ENCODE measurements at regions of chr5 and their contacts with region 1.

Region 1: GRCh38 chr5:149367249-149367971 is 9.6 kb downstream of the PCYOX1L start:
- DNase-seq: peak; percentile 87
- H3K4me3 ChIP-seq: no peak overlapping the region; a peak in 1 of 4 replicates
- H3K27ac ChIP-seq: no peak overlapping the region; a peak in 1 of 4 replicates
- H3K4me1 ChIP-seq: peaks cover 0 to 14% of the 10 kb centered on the region in 2 experiments; a peak in 1 of 4 replicates
- H3K27me3 ChIP-seq: no peaks in the 10 kb centered on the region
- CTCF ChIP-seq: peak; percentile 88
- EP300 ChIP-seq: no peak
- RAD21 ChIP-seq: peak; percentile 87

Region 2: GRCh38 chr5:149301747-149302380 is 65.5 kb before region 1 on chr5:
- CTCF ChIA-PET with region 1: interaction called, 23 read pairs
- POLR2A ChIA-PET with region 1: no interaction called
- DNase-seq: no peak
- H3K4me3 ChIP-seq: no peak overlapping the region
- H3K27ac ChIP-seq: no peak overlapping the region
- H3K4me1 ChIP-seq: peaks cover 0 to 12% of the 10 kb centered on the region in 2 experiments; a peak in 1 of 4 replicates
- H3K27me3 ChIP-seq: no peaks in the 10 kb centered on the region
- CTCF ChIP-seq: no peak
- EP300 ChIP-seq: no peak
- RAD21 ChIP-seq: no peak

Region 3: DNA sequence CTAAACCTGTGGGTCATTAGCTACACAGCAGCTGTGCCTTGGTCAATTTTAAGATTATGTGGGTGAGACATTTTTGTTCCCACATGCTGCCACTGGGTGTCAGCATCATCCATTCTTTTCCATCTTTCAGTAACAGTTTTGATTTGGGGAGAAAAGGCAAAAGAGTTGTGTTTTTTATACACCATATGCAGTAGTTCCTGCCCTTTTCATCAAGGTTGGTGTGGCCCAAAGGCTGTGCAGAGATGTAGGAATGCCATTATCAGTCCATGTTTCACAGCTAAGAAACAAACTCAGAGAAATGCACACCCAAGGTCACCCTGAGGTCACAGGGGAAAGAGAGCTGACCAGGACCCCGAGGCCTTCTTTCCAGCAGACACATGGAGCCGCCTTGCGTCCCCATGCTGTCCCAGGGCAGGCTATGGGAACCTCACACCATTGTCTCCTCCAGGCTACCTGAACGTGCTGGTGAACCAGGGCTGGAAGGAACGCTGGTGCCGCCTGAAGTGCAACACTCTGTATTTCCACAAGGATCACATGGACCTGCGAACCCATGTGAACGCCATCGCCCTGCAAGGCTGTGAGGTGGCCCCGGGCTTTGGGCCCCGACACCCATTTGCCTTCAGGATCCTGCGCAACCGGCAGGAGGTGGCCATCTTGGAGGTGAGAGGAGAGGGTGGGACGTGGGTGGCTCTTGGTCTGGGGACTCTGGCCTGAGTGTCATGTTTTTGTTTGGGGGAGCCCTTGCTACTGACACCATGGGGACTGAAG is 49.9 kb before region 1 on chr5:
- CTCF ChIA-PET with region 1: interaction called, 120 read pairs
- POLR2A ChIA-PET with region 1: no interaction called
- DNase-seq: peak; percentile 76
- H3K4me3 ChIP-seq: no peak overlapping the region
- H3K27ac ChIP-seq: peak overlapping the region in 1 of 2 experiments; percentile 63; a peak in 2 of 4 replicates
- H3K4me1 ChIP-seq: peaks cover 13 to 20% of the 10 kb centered on the region in 2 experiments
- H3K27me3 ChIP-seq: no peaks in the 10 kb centered on the region
- CTCF ChIP-seq: peak; percentile 75
- EP300 ChIP-seq: no peak
- RAD21 ChIP-seq: peak; percentile 90

Region 4: GRCh38 chr5:149345147-149345875 is 22.1 kb before region 1 on chr5 and contains the start of gene GRPEL2:
- CTCF ChIA-PET with region 1: interaction called, 11 read pairs
- POLR2A ChIA-PET with region 1: interaction called, 4 read pairs
- DNase-seq: peak; percentile 92
- H3K4me3 ChIP-seq: peak within 1 kb of the TSS; percentile 94 to 100
- H3K27ac ChIP-seq: peak within 1 kb of the TSS; percentile 70 to 97
- H3K4me1 ChIP-seq: peaks cover 0 to 15% of the 10 kb centered on the region in 2 experiments; a peak in 3 of 4 replicates
- H3K27me3 ChIP-seq: no peaks in the 10 kb centered on the region
- CTCF ChIP-seq: no peak
- EP300 ChIP-seq: no peak
- RAD21 ChIP-seq: no peak
- polyA plus RNA-seq, gene GRPEL2: 4.6 and 6.0 TPM in 2 replicates

Region 5: DNA sequence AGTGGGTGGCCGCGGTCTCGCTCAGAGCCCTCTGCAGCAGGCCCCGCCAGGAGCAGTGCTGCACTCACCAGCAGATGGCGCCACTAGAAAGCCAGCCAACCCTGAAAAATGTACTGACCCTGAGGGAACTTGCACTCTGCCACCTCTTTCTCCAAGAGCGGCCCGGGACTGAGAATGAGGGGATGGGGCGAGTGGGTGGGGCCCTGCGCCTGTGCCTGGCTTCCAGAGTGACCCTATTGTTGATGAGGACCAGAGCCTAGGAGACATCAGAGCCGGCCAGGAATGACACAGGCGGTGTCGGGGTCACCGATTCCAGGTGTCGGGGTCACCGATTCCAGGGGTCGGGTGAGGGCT is 14.6 kb after region 1 on chr5:
- CTCF ChIA-PET with region 1: interaction called, 173 read pairs
- POLR2A ChIA-PET with region 1: interaction called, 3 read pairs
- DNase-seq: peak; percentile 93
- H3K4me3 ChIP-seq: no peak overlapping the region; a peak in 1 of 4 replicates
- H3K27ac ChIP-seq: peak overlapping the region in 1 of 2 experiments; percentile 73; a peak in 1 of 4 replicates
- H3K4me1 ChIP-seq: peaks cover 0 to 48% of the 10 kb centered on the region in 2 experiments; a peak in 1 of 4 replicates
- H3K27me3 ChIP-seq: no peaks in the 10 kb centered on the region
- CTCF ChIP-seq: peak; percentile 91
- EP300 ChIP-seq: no peak
- RAD21 ChIP-seq: peak; percentile 94

Region 6: DNA sequence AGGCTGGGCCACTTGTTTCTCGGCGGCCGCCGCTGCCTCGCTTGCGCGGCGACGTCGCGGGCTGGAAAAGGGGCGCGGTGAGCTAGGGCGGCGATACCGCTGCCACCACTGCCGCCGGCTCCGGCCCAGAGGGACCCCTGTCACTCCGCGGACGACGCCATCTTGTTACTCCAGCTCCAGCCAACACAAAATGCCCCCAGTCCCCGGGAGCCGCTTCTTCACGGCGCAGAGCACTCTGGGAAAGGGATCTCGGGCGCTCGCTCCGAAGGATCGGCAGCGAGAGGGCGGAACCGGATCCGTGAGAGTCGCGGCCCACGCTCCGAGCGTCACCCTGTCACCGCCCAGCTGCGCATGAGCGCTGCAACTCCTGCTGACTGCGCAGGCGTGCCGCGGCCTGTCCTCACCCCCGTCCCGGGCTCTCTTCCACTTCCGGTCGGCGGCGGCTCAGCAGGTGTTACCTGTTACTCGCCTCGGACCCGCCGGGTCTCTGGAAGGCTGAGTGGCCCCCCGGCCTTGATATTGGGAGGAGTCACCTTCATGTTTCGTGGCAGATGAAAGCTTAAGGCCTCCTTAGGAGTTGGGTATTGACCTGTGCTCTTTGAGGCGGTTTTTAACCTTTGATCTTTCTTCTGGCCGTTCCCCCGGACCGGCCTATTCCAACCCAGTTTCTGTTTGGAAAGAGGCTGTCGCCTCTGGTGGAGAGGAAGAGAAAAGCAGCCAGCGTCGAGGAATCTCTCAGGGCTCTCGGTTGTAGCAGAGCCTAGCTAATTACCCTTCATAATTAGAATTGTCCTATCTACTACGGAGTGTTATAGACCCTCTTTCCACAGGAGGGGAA is 184.0 kb after region 1 on chr5 and contains the start of gene CSNK1A1:
- CTCF ChIA-PET with region 1: interaction called, 34 read pairs
- POLR2A ChIA-PET with region 1: no interaction called
- DNase-seq: peak; percentile 99
- H3K4me3 ChIP-seq: peak within 1 kb of the TSS; percentile 88 to 95
- H3K27ac ChIP-seq: peak within 1 kb of the TSS; percentile 92 to 96
- H3K4me1 ChIP-seq: peaks cover 6 to 15% of the 10 kb centered on the region in 2 experiments; a peak in 3 of 4 replicates
- H3K27me3 ChIP-seq: no peaks in the 10 kb centered on the region
- CTCF ChIP-seq: peak; percentile 78
- EP300 ChIP-seq: 0 out of 4 replicates have a peak, but pooled peaks have one; percentile 6 to 19
- RAD21 ChIP-seq: peak; percentile 66
- polyA plus RNA-seq, gene CSNK1A1: 70.7 and 96.6 TPM in 2 replicates

Region 7: GRCh38 chr5:149567226-149567625 is 199.8 kb after region 1 on chr5:
- CTCF ChIA-PET with region 1: interaction called, 16 read pairs
- POLR2A ChIA-PET with region 1: no interaction called
- DNase-seq: no peak
- H3K4me3 ChIP-seq: no peak overlapping the region
- H3K27ac ChIP-seq: no peak overlapping the region
- H3K4me1 ChIP-seq: peaks cover 5 to 18% of the 10 kb centered on the region in 2 experiments
- H3K27me3 ChIP-seq: no peaks in the 10 kb centered on the region
- CTCF ChIP-seq: no peak
- EP300 ChIP-seq: no peak
- RAD21 ChIP-seq: no peak

Region 8: DNA sequence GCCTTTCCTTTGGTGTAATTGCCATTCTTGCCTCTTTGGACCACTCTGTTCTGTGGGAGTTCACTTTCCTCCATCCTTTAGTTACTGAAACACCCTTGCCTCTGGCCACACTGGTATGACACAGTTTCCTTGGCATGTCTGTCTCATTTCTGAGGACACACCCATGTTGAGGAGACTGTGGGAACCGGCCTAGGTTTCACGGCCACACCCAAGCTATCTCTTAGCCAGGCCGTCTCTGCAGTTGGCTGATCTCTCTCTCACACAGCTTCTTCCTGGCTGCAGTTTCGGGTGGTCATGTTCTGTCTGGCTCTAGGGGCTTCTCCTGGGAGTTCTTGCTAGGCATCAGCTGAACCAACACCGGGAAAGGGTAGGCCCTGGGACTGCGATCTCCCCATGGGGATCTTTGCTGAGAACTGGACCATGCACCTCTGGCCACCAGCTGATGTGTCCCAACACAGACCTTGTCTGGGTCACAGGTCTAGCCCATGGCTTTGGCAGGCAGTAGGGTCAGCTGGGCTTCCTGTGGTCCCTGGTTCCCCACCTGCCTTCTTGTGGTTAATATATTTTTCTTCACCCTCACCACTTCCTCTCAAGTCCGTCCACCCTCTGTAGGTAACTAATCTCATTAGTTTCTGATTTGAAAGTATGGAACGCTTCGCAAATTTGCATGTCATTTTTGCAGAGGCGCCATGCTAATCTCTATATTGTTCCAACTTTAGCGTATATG is 238.8 kb after region 1 on chr5:
- CTCF ChIA-PET with region 1: no interaction called
- POLR2A ChIA-PET with region 1: no interaction called
- DNase-seq: no peak
- H3K4me3 ChIP-seq: no peak overlapping the region
- H3K27ac ChIP-seq: no peak overlapping the region
- H3K4me1 ChIP-seq: no peaks in the 10 kb centered on the region
- H3K27me3 ChIP-seq: no peaks in the 10 kb centered on the region
- CTCF ChIP-seq: no peak
- EP300 ChIP-seq: no peak
- RAD21 ChIP-seq: no peak

Measured in SK-N-SH (cell line).